ENCODE measurements at regions of chr17 and their contacts with region 1.

Region 1: DNA sequence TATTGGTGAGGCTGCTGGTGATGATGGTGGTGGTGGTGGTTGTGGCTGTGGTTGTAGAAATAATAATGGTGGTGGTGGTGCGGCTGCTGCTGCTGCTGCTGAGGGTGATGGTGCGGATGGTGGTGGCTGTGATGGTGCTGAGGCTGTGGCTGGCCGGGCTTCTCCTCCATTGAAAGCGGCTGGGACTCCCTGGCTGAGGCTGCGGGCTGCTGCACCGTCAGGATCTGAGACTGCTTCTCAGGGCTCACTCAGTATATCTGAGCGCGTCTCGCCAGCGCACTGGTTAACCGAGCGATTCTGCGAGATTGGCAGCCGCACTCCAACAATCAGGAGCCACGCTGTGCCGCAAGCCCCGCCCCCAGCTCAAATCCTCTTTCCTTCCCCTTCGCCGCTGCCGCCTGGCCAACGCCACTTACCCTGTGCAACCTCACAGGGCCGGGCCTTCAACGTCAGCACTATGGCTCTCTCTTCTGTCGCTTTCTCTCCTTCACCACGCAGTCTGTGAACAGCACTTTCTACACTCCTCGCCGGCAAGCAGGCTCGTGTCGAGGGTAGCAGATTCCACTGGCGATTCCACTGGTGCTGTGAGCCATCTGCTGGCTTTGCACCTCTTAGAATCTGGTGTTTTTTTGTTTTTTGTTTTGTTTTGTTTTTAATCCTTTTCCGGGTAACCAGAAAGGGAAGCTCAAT is at the start of gene NUFIP2:
- DNase-seq: peak; percentile 95 to 99 (median 98)
- H3K4me3 ChIP-seq: peak within 1 kb of the TSS; percentile 77 to 79
- H3K4me3 Mint-ChIP-seq: peak within 1 kb of the TSS; percentile 99 to 100 (median 100)
- H3K27ac ChIP-seq: peak within 1 kb of the TSS; percentile 77
- H3K27ac Mint-ChIP-seq: peak within 1 kb of the TSS; percentile 98 to 100 (median 99)
- H3K4me1 ChIP-seq: peaks cover 41% of the 10 kb centered on the region
- H3K4me1 Mint-ChIP-seq: peaks cover 20 to 51% (median 34%) of the 10 kb centered on the region in 4 donors
- H3K27me3 ChIP-seq: no peaks in the 10 kb centered on the region
- H3K27me3 Mint-ChIP-seq: no peaks in the 10 kb centered on the region
- total RNA-seq, gene NUFIP2: 77.5 to 85.1 TPM

Region 2: GRCh38 chr17:29140051-29140621 is 153.9 kb before region 1 on chr17:
- CTCF ChIA-PET with region 1: interaction called, 13 read pairs
- POLR2A ChIA-PET with region 1: interaction called, 11 read pairs
- intact Hi-C with region 1: loop called (anchors 2 kb)
- DNase-seq: peak; percentile 65 to 92 (median 69)
- H3K4me3 ChIP-seq: peak overlapping the region; percentile 55 to 72
- H3K4me3 Mint-ChIP-seq: peak overlapping the region; percentile 90 to 98 (median 92)
- H3K27ac ChIP-seq: peak overlapping the region; percentile 81
- H3K27ac Mint-ChIP-seq: peak overlapping the region; percentile 91 to 99 (median 97)
- H3K4me1 ChIP-seq: peaks cover 69% of the 10 kb centered on the region
- H3K4me1 Mint-ChIP-seq: peaks cover 49 to 82% (median 63%) of the 10 kb centered on the region in 4 donors
- H3K27me3 ChIP-seq: no peaks in the 10 kb centered on the region
- H3K27me3 Mint-ChIP-seq: no peaks in the 10 kb centered on the region

Region 3: DNA sequence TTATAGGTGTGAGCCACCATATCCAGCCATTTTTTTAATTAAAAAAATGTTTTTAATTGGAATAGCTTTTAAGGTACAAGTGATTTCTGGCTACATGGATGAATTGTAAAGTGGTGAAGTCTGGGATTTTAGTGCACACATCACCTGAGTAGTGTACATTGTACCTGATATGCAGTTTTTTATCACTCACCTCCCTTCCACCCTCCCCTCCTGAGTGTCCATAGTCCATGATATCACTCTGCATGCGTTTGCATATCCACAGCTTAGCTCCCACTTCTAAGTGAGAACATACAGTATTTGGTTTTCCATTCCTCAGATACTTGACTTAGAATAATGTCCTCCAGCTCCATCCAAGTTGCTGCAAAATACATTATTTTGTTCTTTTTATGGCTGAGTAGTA is 60.7 kb before region 1 on chr17:
- CTCF ChIA-PET with region 1: no interaction called
- POLR2A ChIA-PET with region 1: no interaction called
- intact Hi-C with region 1: no loop called
- DNase-seq: no peak
- H3K4me3 ChIP-seq: no peak overlapping the region
- H3K4me3 Mint-ChIP-seq: no peak overlapping the region
- H3K27ac ChIP-seq: no peak overlapping the region
- H3K27ac Mint-ChIP-seq: no peak overlapping the region
- H3K4me1 ChIP-seq: no peaks in the 10 kb centered on the region
- H3K4me1 Mint-ChIP-seq: no peaks in the 10 kb centered on the region
- H3K27me3 ChIP-seq: no peaks in the 10 kb centered on the region
- H3K27me3 Mint-ChIP-seq: no peaks in the 10 kb centered on the region

Region 4: DNA sequence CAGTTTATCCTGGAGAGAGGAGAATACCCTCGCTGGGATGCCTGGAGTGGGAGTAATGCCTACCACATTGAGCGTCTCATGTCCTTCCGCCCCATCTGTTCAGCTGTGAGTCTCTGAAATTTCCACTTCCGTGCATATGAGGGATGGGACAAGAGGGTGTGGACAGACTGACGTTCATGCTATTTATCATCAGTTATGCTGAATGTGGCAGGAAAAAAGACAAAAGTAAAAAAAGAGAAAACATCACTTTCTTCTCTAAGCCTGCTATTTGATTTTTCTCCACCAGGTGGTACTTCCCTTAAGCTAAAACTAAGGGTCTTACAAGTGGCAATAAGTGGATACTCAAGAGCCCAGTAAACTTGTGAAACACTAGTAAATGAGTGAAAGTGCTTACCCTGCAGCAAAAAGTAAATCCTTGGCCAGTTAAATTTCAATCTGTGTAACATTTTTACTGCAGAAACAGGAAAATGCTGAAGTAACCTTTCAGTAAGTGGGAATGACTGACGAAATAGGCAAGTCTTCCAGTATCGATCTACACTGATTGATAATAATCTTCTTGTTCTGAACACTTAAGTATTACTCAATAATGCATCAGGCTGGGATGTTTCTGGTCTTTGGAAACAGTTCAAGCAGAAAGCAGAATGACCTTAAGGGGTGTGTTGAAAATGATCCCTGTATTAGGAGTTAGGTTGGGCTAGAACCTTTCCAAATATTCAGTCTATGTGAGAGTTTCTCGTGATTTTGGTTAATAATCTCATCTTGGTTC is 41.8 kb before region 1 on chr17:
- CTCF ChIA-PET with region 1: interaction called, 5 read pairs
- POLR2A ChIA-PET with region 1: interaction called, 13 read pairs
- intact Hi-C with region 1: loop called (anchors 2 kb)
- DNase-seq: peak in 1 of 5 donors; percentile 6
- H3K4me3 ChIP-seq: no peak overlapping the region
- H3K4me3 Mint-ChIP-seq: no peak overlapping the region
- H3K27ac ChIP-seq: no peak overlapping the region
- H3K27ac Mint-ChIP-seq: peak overlapping the region in 4 of 7 donors; percentile 14 to 37 (median 22)
- H3K4me1 ChIP-seq: no peaks in the 10 kb centered on the region
- H3K4me1 Mint-ChIP-seq: peaks cover 8 to 12% (median 10%) of the 10 kb centered on the region in 4 donors
- H3K27me3 ChIP-seq: no peaks in the 10 kb centered on the region
- H3K27me3 Mint-ChIP-seq: no peaks in the 10 kb centered on the region

Region 5: DNA sequence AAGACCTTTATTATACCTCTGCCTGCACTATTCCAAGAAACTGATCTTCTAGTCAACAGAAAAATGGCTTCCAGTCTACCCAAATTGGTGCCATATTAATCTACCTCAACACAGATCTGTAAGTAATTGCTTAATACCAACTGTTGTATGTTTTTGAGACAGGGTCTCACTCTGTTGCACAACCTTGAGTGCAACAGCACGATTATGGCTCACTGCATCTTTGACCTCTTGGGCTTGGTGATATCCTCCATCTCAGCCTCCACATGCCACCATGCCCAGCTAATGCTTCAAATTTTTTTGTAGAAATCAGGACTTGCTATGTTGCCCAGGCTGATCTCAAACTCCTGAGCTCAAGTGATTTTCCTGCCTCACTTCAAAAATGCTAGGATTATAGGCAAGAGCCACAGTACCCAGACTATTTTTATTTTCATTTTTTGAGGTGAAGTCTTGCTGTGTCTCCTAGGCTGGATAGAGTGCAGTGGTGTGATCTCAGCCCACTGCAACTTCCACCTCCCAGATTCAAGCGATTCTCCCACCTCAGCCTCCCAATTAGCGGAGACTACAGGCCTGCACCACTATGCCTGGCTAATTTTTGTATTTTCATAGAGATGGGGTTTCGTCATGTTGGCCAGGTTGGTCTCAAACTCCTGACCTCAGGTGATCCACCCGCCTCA is 14.5 kb before region 1 on chr17:
- CTCF ChIA-PET with region 1: interaction called, 17 read pairs
- POLR2A ChIA-PET with region 1: interaction called, 19 read pairs
- intact Hi-C with region 1: no loop called
- DNase-seq: no peak
- H3K4me3 ChIP-seq: no peak overlapping the region
- H3K4me3 Mint-ChIP-seq: peak overlapping the region in 2 of 8 donors; percentile 33 to 44
- H3K27ac ChIP-seq: no peak overlapping the region
- H3K27ac Mint-ChIP-seq: peak overlapping the region in 1 of 7 donors; percentile 49
- H3K4me1 ChIP-seq: peaks cover 71% of the 10 kb centered on the region
- H3K4me1 Mint-ChIP-seq: peaks cover 40 to 77% (median 58%) of the 10 kb centered on the region in 4 donors
- H3K27me3 ChIP-seq: no peaks in the 10 kb centered on the region
- H3K27me3 Mint-ChIP-seq: no peaks in the 10 kb centered on the region

Region 6: DNA sequence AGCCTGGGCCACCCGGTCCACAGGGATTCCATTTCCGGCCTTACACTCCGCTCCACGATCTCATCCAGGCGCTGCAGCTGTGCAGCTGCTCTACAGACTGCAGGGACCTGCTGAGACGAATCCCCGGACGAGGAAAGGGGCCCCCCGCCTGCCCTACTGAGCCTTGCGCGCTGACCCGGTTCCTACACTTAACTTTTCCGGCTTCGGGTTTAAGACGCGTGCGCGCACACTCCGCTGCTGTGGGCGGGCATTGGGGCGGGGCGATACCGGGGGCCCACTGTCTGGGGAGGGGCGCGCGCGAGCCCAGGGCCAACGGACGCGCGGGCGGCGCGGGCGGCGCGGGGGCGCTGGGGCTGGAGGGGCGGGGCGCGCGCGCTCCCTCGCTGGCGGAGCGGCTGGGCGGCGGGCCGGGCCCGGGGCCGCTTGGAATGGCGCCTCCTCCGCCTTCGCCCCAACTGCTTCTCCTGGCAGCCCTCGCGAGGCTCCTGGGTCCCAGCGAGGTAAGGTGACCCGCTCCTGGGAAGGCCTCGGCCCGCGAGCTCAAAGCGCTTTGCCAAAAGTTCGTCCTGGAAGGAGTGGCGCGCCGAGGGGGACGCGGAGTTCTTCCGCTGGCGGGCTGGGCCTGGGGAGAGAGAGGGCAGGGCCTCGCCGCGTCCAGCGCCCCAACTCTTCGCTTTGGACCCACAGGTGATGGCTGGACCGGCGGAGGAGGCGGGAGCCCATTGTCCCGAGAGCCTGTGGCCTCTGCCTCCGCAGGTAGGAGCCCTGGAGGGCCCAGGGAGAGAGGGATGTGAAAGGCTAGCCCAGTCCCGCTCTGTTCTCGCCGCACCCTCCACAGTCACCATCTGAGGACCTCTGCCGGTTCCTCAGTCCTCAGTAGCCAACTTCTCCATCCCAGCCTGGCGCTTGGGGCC is 274.6 kb after region 1 on chr17 and contains the start of gene TP53I13:
- CTCF ChIA-PET with region 1: no interaction called
- POLR2A ChIA-PET with region 1: interaction called, 5 read pairs
- intact Hi-C with region 1: loop called (anchors 5 kb)
- DNase-seq: peak; percentile 78 to 86 (median 83)
- H3K4me3 ChIP-seq: peak within 1 kb of the TSS; percentile 58 to 83
- H3K4me3 Mint-ChIP-seq: peak within 1 kb of the TSS; percentile 92 to 98 (median 96)
- H3K27ac ChIP-seq: peak within 1 kb of the TSS; percentile 61
- H3K27ac Mint-ChIP-seq: peak within 1 kb of the TSS; percentile 92 to 98 (median 95)
- H3K4me1 ChIP-seq: peaks cover 31% of the 10 kb centered on the region
- H3K4me1 Mint-ChIP-seq: peaks cover 23 to 55% (median 34%) of the 10 kb centered on the region in 4 donors
- H3K27me3 ChIP-seq: no peaks in the 10 kb centered on the region
- H3K27me3 Mint-ChIP-seq: no peaks in the 10 kb centered on the region
- total RNA-seq, gene TP53I13: 149 to 158 TPM

Measured in CD4-positive, alpha-beta memory T cell (primary cell).